Upper lobe of right lung (tissue), 1 donor: ENCODE measurements at regions of chr1 and their contacts with region 1.

Region 1: GRCh38 chr1:212477014-212477679 is 44.4 kb downstream of the NENF start:
- DNase-seq: peak; percentile 79
- ATAC-seq: peak; percentile 98
- H3K4me3 ChIP-seq: no peak overlapping the region
- H3K27ac ChIP-seq: no peak overlapping the region
- H3K4me1 ChIP-seq: no peaks in the 10 kb centered on the region
- H3K27me3 ChIP-seq: no peaks in the 10 kb centered on the region
- CTCF ChIP-seq: peak; percentile 92

Region 2: DNA sequence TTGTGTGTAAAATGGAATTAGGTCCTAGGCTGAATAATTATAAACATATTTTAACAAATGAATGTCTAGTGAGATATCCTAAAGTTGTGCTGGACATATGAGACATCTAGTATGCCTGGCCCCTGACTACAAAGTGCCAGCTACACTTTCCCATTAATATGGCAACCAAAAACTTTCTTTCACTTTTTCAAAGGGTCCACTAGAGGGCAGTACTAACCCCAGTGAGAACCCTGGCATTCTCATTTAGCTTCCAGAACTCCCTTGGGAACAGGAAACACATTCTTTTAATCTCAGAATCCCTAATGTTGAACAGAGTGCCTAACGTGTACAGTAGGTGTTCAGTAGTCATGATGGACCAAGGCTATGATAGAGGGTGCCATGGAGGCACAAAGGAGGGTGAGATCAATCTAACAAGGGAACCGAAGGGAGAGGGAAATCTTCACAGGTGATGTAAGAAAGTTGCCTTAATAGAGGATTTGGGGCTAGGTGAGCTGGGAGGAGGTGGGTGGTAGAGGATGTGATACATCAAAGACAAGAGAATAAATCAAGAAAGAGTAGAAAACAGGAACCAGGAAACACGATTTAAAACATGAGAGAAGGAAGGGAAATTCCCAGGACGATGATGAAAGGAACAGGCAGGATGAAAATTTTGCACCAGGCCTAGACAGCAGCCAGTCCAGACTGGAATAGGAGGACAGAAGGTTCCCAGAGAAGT is 272.8 kb after region 1 on chr1:
- intact Hi-C with region 1: loop called (anchors 10 kb)
- DNase-seq: no peak
- ATAC-seq: peak; percentile 91
- H3K4me3 ChIP-seq: no peak overlapping the region
- H3K27ac ChIP-seq: no peak overlapping the region
- H3K4me1 ChIP-seq: peaks cover 31% of the 10 kb centered on the region
- H3K27me3 ChIP-seq: no peaks in the 10 kb centered on the region
- CTCF ChIP-seq: peak; percentile 78